OCI-LY7 (cell line): ENCODE measurements at regions of chr9 and their contacts with region 1.

Region 1: DNA sequence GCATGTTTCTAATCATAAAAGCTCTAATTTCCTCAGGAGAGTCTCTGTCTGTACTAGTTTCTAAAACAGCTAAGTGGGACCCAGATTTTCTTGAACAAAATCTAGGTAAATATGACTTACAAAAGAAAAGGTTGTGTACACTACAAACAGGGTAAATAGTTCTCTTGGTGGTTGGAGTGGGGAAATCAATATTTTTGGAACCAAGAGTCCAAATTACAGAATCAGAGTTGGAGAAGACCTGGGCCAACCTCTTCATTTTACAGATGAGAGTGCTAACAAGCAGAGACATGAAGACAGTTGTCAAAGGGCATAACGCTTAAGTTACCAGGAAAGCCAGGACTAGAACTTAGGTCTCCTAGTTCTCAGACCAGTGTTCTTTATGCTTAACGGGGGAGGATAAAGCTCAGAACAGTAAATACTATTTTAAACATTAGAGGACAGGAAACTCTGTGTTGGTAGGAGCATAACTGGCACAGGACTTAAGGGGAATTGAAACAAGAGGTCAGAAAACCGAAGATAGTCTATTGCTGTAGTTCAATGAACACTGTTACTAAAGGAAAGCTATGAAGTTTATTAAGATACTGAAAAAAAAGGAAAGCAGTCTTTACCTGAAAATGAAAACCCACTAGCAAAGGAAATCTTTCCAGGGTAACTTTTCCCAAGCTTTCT is 9.3 kb upstream of the GOLGA1 start:
- DNase-seq: peak; percentile 68
- H3K4me3 ChIP-seq: peak overlapping the region; percentile 35
- H3K27ac ChIP-seq: peak overlapping the region; percentile 75
- H3K4me1 ChIP-seq: peaks cover 41% of the 10 kb centered on the region
- CTCF ChIP-seq: no peak

Region 2: DNA sequence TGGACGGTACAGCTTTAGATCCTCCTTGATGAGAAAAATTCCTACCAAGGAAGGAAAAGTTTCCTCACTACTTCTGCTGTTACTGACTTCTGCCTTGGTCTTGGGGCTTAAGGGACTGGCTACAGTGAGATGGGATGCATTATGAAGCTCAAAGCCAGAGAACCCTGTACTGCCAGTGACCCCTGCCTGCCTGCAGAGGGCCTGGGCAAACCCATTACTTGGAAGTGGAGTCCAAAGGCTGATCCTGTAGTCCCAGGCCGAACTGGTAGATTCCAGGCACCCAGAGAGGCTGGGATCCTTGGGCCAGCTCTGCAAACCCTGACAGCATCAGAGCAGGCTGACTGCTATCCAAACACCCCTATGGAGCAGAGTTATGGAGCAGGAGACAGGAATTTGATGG is 417.3 kb before region 1 on chr9:
- CTCF ChIA-PET with region 1: no interaction called
- POLR2A ChIA-PET with region 1: no interaction called
- intact Hi-C with region 1: no loop called
- DNase-seq: no peak
- H3K4me3 ChIP-seq: no peak overlapping the region
- H3K27ac ChIP-seq: no peak overlapping the region
- H3K4me1 ChIP-seq: no peaks in the 10 kb centered on the region
- CTCF ChIP-seq: no peak

Region 3: GRCh38 chr9:124794902-124795491 is 155.2 kb before region 1 on chr9:
- CTCF ChIA-PET with region 1: no interaction called
- POLR2A ChIA-PET with region 1: no interaction called
- intact Hi-C with region 1: no loop called
- DNase-seq: no peak
- H3K4me3 ChIP-seq: no peak overlapping the region
- H3K27ac ChIP-seq: no peak overlapping the region
- H3K4me1 ChIP-seq: peaks cover 8% of the 10 kb centered on the region
- CTCF ChIP-seq: 0 out of 2 replicates have a peak, but pooled peaks have one; percentile 28

Region 4: GRCh38 chr9:124964604-124965003 is 14.4 kb after region 1 on chr9:
- CTCF ChIA-PET with region 1: no interaction called
- POLR2A ChIA-PET with region 1: interaction called, 17 read pairs
- intact Hi-C with region 1: no loop called
- DNase-seq: peak; percentile 41
- H3K4me3 ChIP-seq: no peak overlapping the region
- H3K27ac ChIP-seq: peak overlapping the region; percentile 69
- H3K4me1 ChIP-seq: peaks cover 32% of the 10 kb centered on the region
- CTCF ChIP-seq: no peak